ENCODE measurements at regions of chr15 and their contacts with region 1.

Region 1: GRCh38 chr15:65184868-65185738 is at the start of gene CLPX:
- DNase-seq: peak; percentile 93
- ATAC-seq: peak; percentile 97
- H3K4me3 Mint-ChIP-seq: peak within 1 kb of the TSS; percentile 97
- H3K27ac Mint-ChIP-seq: peak within 1 kb of the TSS; percentile 90
- H3K4me1 Mint-ChIP-seq: peaks cover 32% of the 10 kb centered on the region
- H3K27me3 Mint-ChIP-seq: no peaks in the 10 kb centered on the region
- total RNA-seq, gene CLPX: 40.5 to 42.9 TPM

Region 2: GRCh38 chr15:64792282-64792681 is 392.8 kb before region 1 on chr15:
- CTCF ChIA-PET with region 1: no interaction called
- POLR2A ChIA-PET with region 1: no interaction called
- DNase-seq: no peak
- ATAC-seq: no peak
- H3K4me3 Mint-ChIP-seq: no peak overlapping the region
- H3K27ac Mint-ChIP-seq: no peak overlapping the region
- H3K4me1 Mint-ChIP-seq: no peaks in the 10 kb centered on the region
- H3K27me3 Mint-ChIP-seq: no peaks in the 10 kb centered on the region

Region 3: GRCh38 chr15:65298731-65299130 is 113.6 kb after region 1 on chr15:
- CTCF ChIA-PET with region 1: interaction called, 22 read pairs
- POLR2A ChIA-PET with region 1: interaction called, 10 read pairs
- DNase-seq: no peak
- ATAC-seq: no peak
- H3K4me3 Mint-ChIP-seq: peak overlapping the region; percentile 79
- H3K27ac Mint-ChIP-seq: peak overlapping the region; percentile 88
- H3K4me1 Mint-ChIP-seq: peaks cover 56% of the 10 kb centered on the region
- H3K27me3 Mint-ChIP-seq: no peaks in the 10 kb centered on the region

Measured in activated CD8-positive, alpha-beta T cell treated with anti-CD3 and anti-CD28 coated beads, Interleukin-2, amount 10 ng/mL, durations not matched to agents 7 days and 5 days (primary cell).